ENCODE measurements at regions of chr18 and their contacts with region 1.

Region 1: DNA sequence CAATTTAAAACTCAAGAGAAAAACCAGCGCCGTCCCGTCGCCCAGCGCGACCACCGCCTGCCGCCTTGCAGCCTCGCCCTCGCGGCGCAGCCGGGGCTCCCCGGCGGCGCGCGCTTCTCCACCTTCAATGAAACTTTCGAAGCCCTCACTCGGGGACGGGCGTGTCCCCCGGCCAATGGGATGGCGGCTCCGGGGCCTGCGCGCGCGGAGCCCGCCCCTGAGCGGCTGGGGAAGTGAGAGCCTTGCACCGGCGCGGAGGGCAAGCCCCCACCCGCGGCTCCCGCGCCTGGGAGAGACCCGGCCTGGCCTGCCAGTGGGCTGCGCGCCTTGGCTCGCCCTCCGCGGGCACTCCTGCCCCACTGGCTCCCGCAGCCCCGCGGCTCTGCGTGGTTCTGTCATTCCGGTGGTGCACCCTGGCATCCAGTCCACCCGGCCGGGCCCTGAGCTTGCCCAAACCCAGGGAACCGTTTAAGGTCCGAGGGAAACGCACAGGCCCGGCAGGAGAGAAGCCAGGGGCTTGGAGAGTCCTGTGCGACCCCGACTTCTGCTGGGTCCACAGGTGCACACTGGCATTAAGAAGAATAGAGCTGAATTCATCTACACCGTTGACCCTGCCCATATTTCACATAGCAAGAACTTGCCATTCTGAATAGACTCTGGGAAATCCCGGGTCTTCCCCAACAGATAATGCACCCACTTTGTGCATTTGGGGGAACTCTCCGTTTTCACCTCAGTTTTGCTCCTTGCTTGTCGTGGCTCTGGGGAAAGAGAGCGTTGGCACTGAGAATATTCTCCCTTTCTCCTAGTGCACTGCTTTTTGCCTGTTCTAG is at the start of gene PIEZO2:
- DNase-seq: no peak
- H3K4me3 Mint-ChIP-seq: no peak within 1 kb of the TSS
- H3K27ac Mint-ChIP-seq: no peak within 1 kb of the TSS
- H3K4me1 Mint-ChIP-seq: no peaks in the 10 kb centered on the region
- H3K27me3 Mint-ChIP-seq: peaks cover 34% of the 10 kb centered on the region
- total RNA-seq, gene PIEZO2: not detected in 2 replicates

Region 2: GRCh38 chr18:10851824-10852319 is 297.8 kb before region 1 on chr18:
- intact Hi-C with region 1: loop called (anchors 10 kb)
- DNase-seq: no peak
- H3K4me3 Mint-ChIP-seq: no peak overlapping the region
- H3K27ac Mint-ChIP-seq: no peak overlapping the region
- H3K4me1 Mint-ChIP-seq: no peaks in the 10 kb centered on the region
- H3K27me3 Mint-ChIP-seq: peaks cover 4% of the 10 kb centered on the region

Region 3: GRCh38 chr18:11104307-11104706 is 45.3 kb before region 1 on chr18:
- intact Hi-C with region 1: no loop called
- DNase-seq: no peak
- H3K4me3 Mint-ChIP-seq: no peak overlapping the region
- H3K27ac Mint-ChIP-seq: no peak overlapping the region
- H3K4me1 Mint-ChIP-seq: no peaks in the 10 kb centered on the region
- H3K27me3 Mint-ChIP-seq: no peaks in the 10 kb centered on the region

Region 4: GRCh38 chr18:11224153-11224552 is 74.5 kb after region 1 on chr18:
- intact Hi-C with region 1: no loop called
- DNase-seq: no peak
- H3K4me3 Mint-ChIP-seq: no peak overlapping the region
- H3K27ac Mint-ChIP-seq: no peak overlapping the region
- H3K4me1 Mint-ChIP-seq: no peaks in the 10 kb centered on the region
- H3K27me3 Mint-ChIP-seq: no peaks in the 10 kb centered on the region

Measured in activated T-helper 2 cell treated with anti-CD3 and anti-CD28 coated beads, Interferon-gamma antibody, Interleukin-2, Interleukin-4, amounts not matched to agents 10 μg/mL and 5 μg/mL and 100 μg/mL, durations not matched to agents 14 hours and 24 hours and 36 hours (primary cell).